ENCODE measurements at regions of chr4 and their contacts with region 1.

Region 1: DNA sequence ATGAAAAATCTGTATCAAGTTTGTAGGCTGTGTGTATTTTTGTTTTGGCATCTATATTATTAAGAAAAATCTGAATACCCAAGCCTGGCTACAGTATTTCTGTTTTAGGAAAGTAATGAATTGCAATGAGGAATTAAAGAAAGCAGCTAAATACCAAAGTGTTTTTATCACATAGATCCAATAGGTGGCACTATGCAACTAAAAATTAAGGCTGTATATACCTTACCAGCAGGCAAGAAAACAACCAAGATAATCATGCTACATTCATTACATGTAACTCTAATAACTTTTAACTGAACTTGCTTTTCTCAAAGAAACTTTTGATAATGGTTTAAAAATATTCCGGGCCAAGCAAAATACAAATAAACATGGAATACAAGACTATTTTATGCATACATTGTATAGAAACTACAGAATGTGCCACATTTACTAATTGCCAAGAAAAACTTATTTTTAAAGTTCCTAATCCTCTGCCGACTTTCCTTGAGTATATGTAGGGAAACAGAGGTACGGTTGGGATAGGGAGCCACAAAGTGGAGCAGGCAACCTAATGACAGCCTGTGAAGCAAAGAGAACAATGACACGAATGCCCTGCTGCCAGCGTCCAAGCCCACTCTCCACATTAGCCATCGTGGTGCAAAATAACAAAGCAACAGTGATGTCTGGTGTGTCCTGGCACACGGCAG is 63.7 kb downstream of the SEC24D start:
- DNase-seq: no peak
- ATAC-seq: peak; percentile 90
- H3K4me3 ChIP-seq: no peak overlapping the region
- H3K27ac ChIP-seq: no peak overlapping the region
- H3K4me1 ChIP-seq: no peaks in the 10 kb centered on the region
- H3K27me3 ChIP-seq: no peaks in the 10 kb centered on the region
- CTCF ChIP-seq: peak; percentile 26 to 72 (median 53); a peak in 5 of 6 replicates
- EP300 ChIP-seq: no peak
- POLR2A ChIP-seq: no peak
- RAD21 ChIP-seq: peak; percentile 76

Region 2: DNA sequence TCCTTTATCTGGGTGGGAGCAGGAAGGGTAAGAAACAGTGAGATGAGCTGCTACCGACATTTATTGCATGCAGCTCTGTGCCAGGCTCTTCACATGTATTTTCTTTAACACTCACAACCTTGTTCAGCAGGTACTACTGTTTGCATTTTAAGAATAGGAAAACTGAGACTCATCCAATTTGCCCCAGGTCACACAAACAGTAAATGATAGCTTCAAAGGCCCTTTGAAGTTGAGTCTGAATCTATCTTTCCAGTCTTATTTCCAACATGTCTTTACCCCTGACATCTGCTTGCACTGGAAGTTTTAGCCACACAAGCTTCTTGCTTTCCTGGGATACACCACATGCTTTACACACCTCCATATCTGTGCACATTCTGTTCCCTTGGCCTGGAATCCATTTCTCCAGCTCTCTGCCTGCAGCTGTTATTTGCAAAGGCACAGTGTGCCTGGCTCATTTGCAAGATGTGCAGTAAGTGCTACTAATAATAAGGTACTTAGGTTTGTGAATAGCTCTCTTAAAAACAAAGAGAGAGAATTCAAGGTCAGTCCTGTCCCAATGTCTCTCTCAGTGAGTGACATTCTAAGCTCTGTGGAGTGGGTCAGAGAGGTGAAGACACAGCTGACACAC is 25.8 kb before region 1 on chr4:
- CTCF ChIA-PET with region 1: interaction called, 17 read pairs
- POLR2A ChIA-PET with region 1: no interaction called
- RAD21 ChIA-PET with region 1: interaction called, 3 read pairs
- SMC1A ChIA-PET with region 1: interaction called, 3 read pairs
- in situ Hi-C with region 1: no loop called
- intact Hi-C with region 1: no loop called
- DNase-seq: no peak
- ATAC-seq: no peak
- H3K4me3 ChIP-seq: no peak overlapping the region
- H3K27ac ChIP-seq: no peak overlapping the region
- H3K4me1 ChIP-seq: no peaks in the 10 kb centered on the region
- H3K27me3 ChIP-seq: no peaks in the 10 kb centered on the region
- CTCF ChIP-seq: no peak
- EP300 ChIP-seq: no peak
- POLR2A ChIP-seq: no peak
- RAD21 ChIP-seq: no peak

Region 3: GRCh38 chr4:118790544-118790943 is 18.3 kb after region 1 on chr4:
- CTCF ChIA-PET with region 1: interaction called, 12 read pairs
- POLR2A ChIA-PET with region 1: no interaction called
- RAD21 ChIA-PET with region 1: no interaction called
- SMC1A ChIA-PET with region 1: interaction called, 3 read pairs
- in situ Hi-C with region 1: no loop called
- intact Hi-C with region 1: no loop called
- DNase-seq: no peak
- ATAC-seq: no peak
- H3K4me3 ChIP-seq: no peak overlapping the region
- H3K27ac ChIP-seq: no peak overlapping the region
- H3K4me1 ChIP-seq: no peaks in the 10 kb centered on the region
- H3K27me3 ChIP-seq: no peaks in the 10 kb centered on the region
- CTCF ChIP-seq: no peak
- EP300 ChIP-seq: no peak
- POLR2A ChIP-seq: no peak
- RAD21 ChIP-seq: no peak

Region 4: DNA sequence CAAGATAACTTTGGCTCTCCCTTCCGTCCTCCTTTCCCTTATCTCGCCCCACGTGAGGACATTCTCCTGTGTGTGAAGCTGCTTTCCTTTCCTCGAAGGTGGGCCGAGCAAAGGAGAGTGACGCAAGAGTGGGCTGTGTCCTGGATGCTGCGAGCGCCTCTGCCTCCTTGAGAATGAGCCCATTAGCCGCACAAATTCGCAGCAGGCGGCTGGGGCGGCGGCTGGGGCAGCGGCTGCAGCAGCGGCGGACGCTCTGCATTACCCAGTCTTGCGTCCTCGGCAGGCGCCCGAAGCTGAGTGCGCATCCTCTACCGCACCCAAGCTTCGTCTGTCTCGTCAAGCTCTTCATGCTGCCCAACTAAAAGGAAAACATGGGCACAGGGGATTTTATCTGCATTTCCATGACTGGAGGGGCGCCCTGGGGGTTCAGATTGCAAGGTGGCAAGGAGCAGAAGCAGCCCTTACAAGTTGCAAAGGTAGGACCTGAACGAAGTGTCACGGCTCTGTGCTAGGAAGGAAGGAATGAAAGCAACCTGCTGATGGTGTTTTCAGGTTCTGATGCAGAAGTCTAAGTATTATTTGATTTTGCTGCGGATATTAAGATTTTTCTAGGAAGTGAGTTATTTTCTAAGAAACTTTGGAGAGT is 116.6 kb after region 1 on chr4 and contains the start of gene SYNPO2:
- CTCF ChIA-PET with region 1: interaction called, 121 read pairs
- POLR2A ChIA-PET with region 1: no interaction called
- RAD21 ChIA-PET with region 1: interaction called, 3 read pairs
- SMC1A ChIA-PET with region 1: interaction called, 21 read pairs
- in situ Hi-C with region 1: loop called (anchors 5 kb)
- intact Hi-C with region 1: loop called (anchors 1 kb)
- DNase-seq: no peak
- ATAC-seq: peak; percentile 92
- H3K4me3 ChIP-seq: peak within 1 kb of the TSS; percentile 59
- H3K27ac ChIP-seq: no peak within 1 kb of the TSS
- H3K4me1 ChIP-seq: no peaks in the 10 kb centered on the region
- H3K27me3 ChIP-seq: peaks cover 0 to 15% of the 10 kb centered on the region in 2 experiments; a peak in 2 of 4 replicates
- CTCF ChIP-seq: no peak
- EP300 ChIP-seq: no peak
- POLR2A ChIP-seq: no peak
- RAD21 ChIP-seq: no peak
- polyA plus RNA-seq, gene SYNPO2: 0.04 to 0.11 TPM

Region 5: GRCh38 chr4:118981839-118982381 is 209.7 kb after region 1 on chr4:
- CTCF ChIA-PET with region 1: interaction called, 4 read pairs
- POLR2A ChIA-PET with region 1: no interaction called
- RAD21 ChIA-PET with region 1: no interaction called
- SMC1A ChIA-PET with region 1: no interaction called
- in situ Hi-C with region 1: no loop called
- intact Hi-C with region 1: loop called (anchors 5 kb)
- DNase-seq: no peak
- ATAC-seq: peak; percentile 94
- H3K4me3 ChIP-seq: no peak overlapping the region
- H3K27ac ChIP-seq: no peak overlapping the region
- H3K4me1 ChIP-seq: no peaks in the 10 kb centered on the region
- H3K27me3 ChIP-seq: no peaks in the 10 kb centered on the region
- CTCF ChIP-seq: peak; percentile 70 to 80 (median 79)
- EP300 ChIP-seq: no peak
- POLR2A ChIP-seq: no peak
- RAD21 ChIP-seq: peak; percentile 98

Region 6: DNA sequence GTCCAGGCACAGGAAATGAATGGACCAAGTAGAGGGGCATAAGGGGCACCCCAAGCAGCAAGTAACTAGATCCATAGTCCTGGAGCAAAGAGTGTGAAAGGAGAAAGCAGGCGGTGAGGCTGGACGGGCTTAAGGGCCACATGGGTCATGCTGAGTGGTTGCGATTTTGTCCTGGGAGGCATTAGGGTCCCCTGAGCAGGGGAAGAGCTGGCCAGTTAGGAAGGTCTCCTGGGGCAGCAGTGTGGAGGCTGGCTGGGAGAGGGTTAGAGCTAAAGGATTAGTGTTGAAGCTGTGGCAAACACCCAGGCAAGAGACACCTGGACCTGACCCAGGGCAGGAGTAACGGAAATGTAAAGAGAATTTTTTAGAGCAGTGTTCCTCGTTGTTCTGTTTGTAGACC is 389.9 kb after region 1 on chr4:
- CTCF ChIA-PET with region 1: no interaction called
- POLR2A ChIA-PET with region 1: no interaction called
- RAD21 ChIA-PET with region 1: no interaction called
- SMC1A ChIA-PET with region 1: no interaction called
- in situ Hi-C with region 1: no loop called
- intact Hi-C with region 1: no loop called
- DNase-seq: no peak
- ATAC-seq: no peak
- H3K4me3 ChIP-seq: no peak overlapping the region
- H3K27ac ChIP-seq: no peak overlapping the region
- H3K4me1 ChIP-seq: no peaks in the 10 kb centered on the region
- H3K27me3 ChIP-seq: no peaks in the 10 kb centered on the region; a peak in 1 of 4 replicates
- CTCF ChIP-seq: no peak
- EP300 ChIP-seq: no peak
- POLR2A ChIP-seq: no peak
- RAD21 ChIP-seq: no peak